ENCODE measurements at regions of chr11 and their contacts with region 1.

Region 1: DNA sequence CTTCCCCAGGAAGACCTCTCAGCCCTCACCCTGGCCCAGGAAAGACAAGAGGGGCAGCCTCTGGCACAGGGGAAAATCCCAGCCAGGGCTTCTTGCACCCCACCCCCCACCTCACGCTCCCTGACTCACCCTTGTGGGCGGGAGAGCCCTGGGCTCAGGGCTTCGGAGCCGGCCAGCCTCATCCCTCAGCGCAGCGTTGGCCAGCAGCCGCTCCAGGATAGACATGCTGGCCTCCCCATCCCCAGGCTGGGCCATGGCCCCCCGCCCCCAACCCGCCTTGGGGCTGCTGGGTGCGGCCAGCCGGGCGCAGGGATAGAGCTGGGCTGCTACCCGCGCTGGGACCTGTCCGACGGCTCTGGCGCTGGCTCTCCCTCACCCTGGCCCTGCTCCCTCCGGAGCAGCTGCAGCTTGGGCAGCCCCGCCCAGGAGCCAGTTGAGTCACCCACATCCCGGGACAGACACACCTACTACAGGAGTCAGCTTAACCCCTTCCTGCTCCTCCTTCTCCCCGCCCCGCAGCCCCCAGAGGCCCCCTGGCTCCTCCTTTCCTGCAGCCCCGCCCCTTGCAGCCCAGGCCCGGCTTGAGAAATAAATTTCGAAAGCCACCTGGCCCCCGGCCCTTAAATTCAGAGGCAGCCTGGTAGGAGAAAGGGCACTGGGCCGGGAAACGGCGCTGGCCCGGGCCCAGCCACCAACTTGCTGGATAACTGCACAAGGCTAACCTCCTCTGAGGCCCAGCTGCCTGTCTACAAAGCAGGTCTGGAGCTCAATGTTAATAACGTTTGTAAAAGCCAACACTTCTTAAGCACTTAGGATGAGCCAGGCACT is 13.4 kb downstream of the TNKS1BP1 start:
- DNase-seq: peak; percentile 97 to 99
- H3K4me3 ChIP-seq: peak overlapping the region; percentile 53 to 62
- H3K27ac ChIP-seq: peak overlapping the region; percentile 76 to 79
- H3K4me1 ChIP-seq: peaks cover 0 to 82% (median 67%) of the 10 kb centered on the region in 4 donors
- H3K27me3 ChIP-seq: no peaks in the 10 kb centered on the region
- CTCF ChIP-seq: no peak

Region 2: DNA sequence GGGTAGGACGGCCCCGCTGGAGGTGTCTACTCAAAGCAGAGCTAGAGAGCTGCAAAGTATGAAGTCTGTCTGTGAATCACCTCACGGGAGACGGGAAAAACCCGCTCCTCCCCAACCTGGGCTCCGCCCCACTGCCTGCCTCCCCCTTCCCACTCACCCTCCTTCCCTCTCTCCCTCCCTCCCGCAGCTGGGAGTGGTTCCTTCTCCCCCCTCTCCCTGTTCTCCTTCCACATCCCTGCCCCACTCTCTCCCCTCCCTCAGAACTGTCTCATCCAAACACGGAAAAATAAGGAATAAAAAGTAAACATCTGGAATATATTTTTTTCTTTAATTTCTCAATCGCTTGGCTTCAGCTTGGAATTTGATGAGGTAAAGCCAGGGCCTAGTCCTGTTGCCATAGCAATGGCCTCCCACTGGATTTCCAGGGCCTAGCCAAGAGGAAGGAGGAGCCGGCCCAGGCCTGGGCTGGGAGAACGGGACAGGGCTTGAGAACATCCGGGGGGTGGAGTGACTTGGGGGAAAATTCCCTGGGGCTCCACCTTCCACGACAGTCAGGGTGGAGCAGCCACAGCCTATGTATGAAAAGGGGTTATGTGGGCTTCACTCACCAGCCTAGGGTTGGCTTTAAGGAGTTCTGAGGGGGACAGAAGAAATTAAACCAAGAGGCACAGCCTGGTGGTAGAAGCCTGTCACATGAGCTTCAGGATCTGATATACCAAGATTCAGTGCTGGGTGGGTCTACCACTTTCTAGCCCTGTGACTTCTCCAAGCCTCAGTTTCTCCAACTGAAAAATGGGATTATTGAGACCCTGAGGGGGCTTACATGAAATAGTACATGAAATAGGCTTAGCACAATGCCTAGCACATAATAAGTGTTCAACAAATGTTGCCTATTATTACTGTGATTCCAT is 11.2 kb after region 1 on chr11:
- intact Hi-C with region 1: loop called (anchors 1 kb)
- DNase-seq: peak; percentile 97 to 98
- H3K4me3 ChIP-seq: peak overlapping the region; percentile 81 to 92
- H3K27ac ChIP-seq: peak overlapping the region; percentile 94 to 98
- H3K4me1 ChIP-seq: peaks cover 4 to 72% (median 64%) of the 10 kb centered on the region in 4 donors
- H3K27me3 ChIP-seq: no peaks in the 10 kb centered on the region
- CTCF ChIP-seq: no peak

Measured in tibial artery (tissue), 4 donors.